ENCODE measurements at regions of chr6 and their contacts with region 1.

Region 1: GRCh38 chr6:10694302-10695085 is at the starts of genes C6orf52 and PAK1IP1:
- DNase-seq: peak; percentile 97
- H3K4me3 ChIP-seq: peak within 1 kb of the TSS; percentile 93 to 100 (median 100)
- H3K27ac ChIP-seq: peak within 1 kb of the TSS; percentile 95
- H3K4me1 ChIP-seq: peaks cover 19% of the 10 kb centered on the region
- H3K27me3 ChIP-seq: no peaks in the 10 kb centered on the region
- CTCF ChIP-seq: no peak
- POLR2A ChIP-seq: peak; percentile 92
- total RNA-seq, gene C6orf52: not detected in 2 replicates
- total RNA-seq, gene PAK1IP1: 20.6 and 20.9 TPM in 2 replicates

Region 2: GRCh38 chr6:10510592-10511367 is 183.7 kb before region 1 on chr6:
- CTCF ChIA-PET with region 1: interaction called, 11 read pairs
- POLR2A ChIA-PET with region 1: interaction called, 5 read pairs
- dilution Hi-C with region 1: no loop called
- intact Hi-C with region 1: loop called (anchors 1 kb)
- DNase-seq: peak; percentile 75
- H3K4me3 ChIP-seq: no peak overlapping the region
- H3K27ac ChIP-seq: no peak overlapping the region
- H3K4me1 ChIP-seq: no peaks in the 10 kb centered on the region
- H3K27me3 ChIP-seq: peaks cover 0 to 4% of the 10 kb centered on the region in 2 experiments
- CTCF ChIP-seq: peak; percentile 82 to 83
- POLR2A ChIP-seq: no peak

Region 3: GRCh38 chr6:10555625-10556309 is 138.7 kb before region 1 on chr6:
- CTCF ChIA-PET with region 1: interaction called, 3 read pairs
- POLR2A ChIA-PET with region 1: no interaction called
- dilution Hi-C with region 1: no loop called
- intact Hi-C with region 1: loop called (anchors 1 kb)
- DNase-seq: peak; percentile 82
- H3K4me3 ChIP-seq: peak overlapping the region; percentile 19 to 57 (median 24)
- H3K27ac ChIP-seq: peak overlapping the region; percentile 74
- H3K4me1 ChIP-seq: peaks cover 25% of the 10 kb centered on the region
- H3K27me3 ChIP-seq: no peaks in the 10 kb centered on the region
- CTCF ChIP-seq: no peak
- POLR2A ChIP-seq: no peak

Region 4: GRCh38 chr6:10722820-10723566 is 28.5 kb after region 1 on chr6 and contains the start of gene TMEM14C:
- CTCF ChIA-PET with region 1: interaction called, 4 read pairs
- POLR2A ChIA-PET with region 1: interaction called, 5 read pairs
- dilution Hi-C with region 1: no loop called
- intact Hi-C with region 1: loop called (anchors 1 kb)
- DNase-seq: peak; percentile 98
- H3K4me3 ChIP-seq: peak within 1 kb of the TSS; percentile 59 to 79 (median 76)
- H3K27ac ChIP-seq: peak within 1 kb of the TSS; percentile 83
- H3K4me1 ChIP-seq: peaks cover 10% of the 10 kb centered on the region
- H3K27me3 ChIP-seq: no peaks in the 10 kb centered on the region
- CTCF ChIP-seq: no peak
- POLR2A ChIP-seq: peak; percentile 88
- total RNA-seq, gene TMEM14C: 68.0 and 89.3 TPM in 2 replicates

Region 5: GRCh38 chr6:10759312-10759839 is 64.9 kb after region 1 on chr6:
- CTCF ChIA-PET with region 1: interaction called, 3 read pairs
- POLR2A ChIA-PET with region 1: interaction called, 11 read pairs
- dilution Hi-C with region 1: no loop called
- intact Hi-C with region 1: loop called (anchors 1 kb)
- DNase-seq: peak; percentile 85
- H3K4me3 ChIP-seq: no peak overlapping the region
- H3K27ac ChIP-seq: peak overlapping the region; percentile 41
- H3K4me1 ChIP-seq: peaks cover 15% of the 10 kb centered on the region
- H3K27me3 ChIP-seq: no peaks in the 10 kb centered on the region
- CTCF ChIP-seq: peak; percentile 46 to 47
- POLR2A ChIP-seq: no peak

Region 6: DNA sequence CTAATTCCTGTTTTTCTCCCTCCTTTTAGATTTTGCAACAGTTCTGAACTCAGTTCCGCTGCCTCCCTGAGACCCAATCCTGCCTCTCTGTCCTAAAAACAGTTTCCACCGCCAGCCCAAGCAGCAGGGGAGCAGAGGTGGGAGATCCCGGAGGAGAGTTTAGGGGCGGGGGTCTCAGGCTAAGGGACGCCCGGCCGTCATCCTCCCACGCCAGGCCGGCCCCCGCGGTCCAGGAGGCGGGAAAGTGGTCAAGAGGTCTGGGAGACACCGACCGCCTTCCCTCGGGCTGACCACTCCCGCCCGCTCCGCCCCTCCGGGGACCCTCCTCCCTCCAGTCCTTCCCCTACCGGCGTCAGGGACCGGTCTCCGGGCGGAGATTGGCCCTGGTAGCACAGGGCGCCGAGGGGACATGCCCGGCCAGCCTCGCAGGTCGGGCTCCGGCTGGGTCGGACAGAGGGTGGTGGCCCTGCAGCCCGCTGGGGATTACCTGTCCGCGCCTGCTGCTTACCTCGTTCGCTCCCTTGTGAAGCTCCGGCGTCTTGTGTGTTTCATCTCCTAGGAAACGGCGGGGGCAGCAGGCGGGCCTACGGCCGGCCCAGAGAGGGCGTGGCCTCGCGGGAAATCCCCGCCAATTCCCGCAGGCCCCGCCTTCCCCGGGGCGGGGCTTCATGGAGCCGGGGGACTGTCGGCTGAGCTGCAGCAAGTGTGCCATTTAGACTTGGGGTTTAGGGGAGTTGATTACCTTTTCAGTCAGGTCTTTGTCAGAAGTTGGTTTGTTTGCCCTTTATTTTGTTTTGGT is 143.7 kb after region 1 on chr6 and contains the start of gene MAK:
- CTCF ChIA-PET with region 1: no interaction called
- POLR2A ChIA-PET with region 1: no interaction called
- dilution Hi-C with region 1: no loop called
- intact Hi-C with region 1: loop called (anchors 1 kb)
- DNase-seq: peak; percentile 90
- H3K4me3 ChIP-seq: peak within 1 kb of the TSS; percentile 27 to 56 (median 43)
- H3K27ac ChIP-seq: no peak within 1 kb of the TSS
- H3K4me1 ChIP-seq: peaks cover 8% of the 10 kb centered on the region
- H3K27me3 ChIP-seq: peaks cover 34 to 35% of the 10 kb centered on the region in 2 experiments
- CTCF ChIP-seq: no peak
- POLR2A ChIP-seq: no peak
- total RNA-seq, gene MAK: not detected in 2 replicates